A549 (cell line): ENCODE measurements at regions of chr2 and their contacts with region 1.

Region 1: GRCh38 chr2:174465327-174465726 is 21.5 kb downstream of the GPR155 start:
- DNase-seq: peak in 1 of 2 experiments; percentile 33
- ATAC-seq: peak; percentile 56 to 67; a peak in 4 of 6 replicates
- H3K4me3 ChIP-seq: no peak overlapping the region
- H3K27ac ChIP-seq: no peak overlapping the region
- H3K4me1 ChIP-seq: no peaks in the 10 kb centered on the region
- CTCF ChIP-seq: no peak
- EP300 ChIP-seq: no peak
- POLR2A ChIP-seq: no peak
- RAD21 ChIP-seq: no peak

Region 2: DNA sequence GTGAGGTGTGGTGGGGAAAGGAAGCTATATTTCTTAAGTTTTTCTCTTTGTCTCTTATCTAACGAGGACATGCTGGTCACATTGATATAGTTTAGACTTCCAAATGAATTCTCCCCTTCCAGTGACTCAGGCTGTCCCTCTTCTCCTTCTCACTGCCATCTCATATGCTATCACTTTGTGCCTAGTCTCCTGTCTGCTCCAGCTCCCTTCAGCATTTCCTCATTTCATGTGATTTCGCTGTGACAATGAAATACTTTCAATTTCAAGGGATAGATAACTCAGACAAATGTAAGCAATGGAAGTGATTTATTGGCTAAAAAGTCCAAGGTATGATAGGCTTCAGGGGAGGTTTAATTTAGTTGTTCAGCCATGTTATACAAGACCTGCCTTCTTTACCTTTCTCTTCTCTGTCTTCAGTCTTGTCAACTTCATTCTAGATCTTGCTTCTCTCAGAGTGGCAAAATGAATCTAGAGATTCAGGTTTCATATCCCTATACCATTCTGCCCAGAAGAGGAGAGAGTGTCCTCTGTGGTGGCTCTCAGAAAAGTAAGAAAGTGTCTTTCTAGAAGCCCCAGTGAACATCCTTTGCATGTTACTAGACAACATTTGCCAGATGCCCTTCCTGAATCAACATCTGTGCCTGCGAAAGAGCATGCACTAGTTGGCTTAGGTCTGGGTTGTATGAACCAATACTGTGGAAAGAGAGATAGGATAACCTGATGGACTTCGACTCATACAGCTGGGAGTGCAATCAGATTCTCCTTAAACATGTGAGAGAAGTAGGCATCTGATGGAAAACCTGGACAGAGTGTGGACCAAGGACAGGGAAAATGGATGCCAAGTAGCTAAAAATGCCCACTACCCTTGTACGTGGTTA is 51.4 kb after region 1 on chr2:
- CTCF ChIA-PET with region 1: interaction called, 27 read pairs
- POLR2A ChIA-PET with region 1: no interaction called
- DNase-seq: no peak
- ATAC-seq: no peak
- H3K4me3 ChIP-seq: no peak overlapping the region
- H3K27ac ChIP-seq: no peak overlapping the region
- H3K4me1 ChIP-seq: no peaks in the 10 kb centered on the region
- CTCF ChIP-seq: no peak
- EP300 ChIP-seq: no peak
- POLR2A ChIP-seq: no peak
- RAD21 ChIP-seq: no peak

Region 3: GRCh38 chr2:174546581-174547506 is 81.5 kb after region 1 on chr2:
- CTCF ChIA-PET with region 1: interaction called, 32 read pairs
- POLR2A ChIA-PET with region 1: interaction called, 4 read pairs
- DNase-seq: peak in 1 of 2 experiments; percentile 50
- ATAC-seq: peak; percentile 67 to 92
- H3K4me3 ChIP-seq: no peak overlapping the region
- H3K27ac ChIP-seq: no peak overlapping the region
- H3K4me1 ChIP-seq: no peaks in the 10 kb centered on the region
- CTCF ChIP-seq: peak; percentile 28
- EP300 ChIP-seq: no peak
- POLR2A ChIP-seq: no peak
- RAD21 ChIP-seq: peak; percentile 47 to 66

Region 4: GRCh38 chr2:174682578-174683391 is 217.5 kb after region 1 on chr2:
- CTCF ChIA-PET with region 1: interaction called, 78 read pairs
- POLR2A ChIA-PET with region 1: no interaction called
- DNase-seq: peak; percentile 55 to 64
- ATAC-seq: peak; percentile 73 to 76
- H3K4me3 ChIP-seq: peak overlapping the region; percentile 98
- H3K27ac ChIP-seq: peak overlapping the region; percentile 97 to 98
- H3K4me1 ChIP-seq: peaks cover 22% of the 10 kb centered on the region; the same call in 2 of the 3 replicates
- CTCF ChIP-seq: no peak
- EP300 ChIP-seq: no peak
- POLR2A ChIP-seq: no peak; the same call in 1 of the 2 replicates
- RAD21 ChIP-seq: no peak

Region 5: DNA sequence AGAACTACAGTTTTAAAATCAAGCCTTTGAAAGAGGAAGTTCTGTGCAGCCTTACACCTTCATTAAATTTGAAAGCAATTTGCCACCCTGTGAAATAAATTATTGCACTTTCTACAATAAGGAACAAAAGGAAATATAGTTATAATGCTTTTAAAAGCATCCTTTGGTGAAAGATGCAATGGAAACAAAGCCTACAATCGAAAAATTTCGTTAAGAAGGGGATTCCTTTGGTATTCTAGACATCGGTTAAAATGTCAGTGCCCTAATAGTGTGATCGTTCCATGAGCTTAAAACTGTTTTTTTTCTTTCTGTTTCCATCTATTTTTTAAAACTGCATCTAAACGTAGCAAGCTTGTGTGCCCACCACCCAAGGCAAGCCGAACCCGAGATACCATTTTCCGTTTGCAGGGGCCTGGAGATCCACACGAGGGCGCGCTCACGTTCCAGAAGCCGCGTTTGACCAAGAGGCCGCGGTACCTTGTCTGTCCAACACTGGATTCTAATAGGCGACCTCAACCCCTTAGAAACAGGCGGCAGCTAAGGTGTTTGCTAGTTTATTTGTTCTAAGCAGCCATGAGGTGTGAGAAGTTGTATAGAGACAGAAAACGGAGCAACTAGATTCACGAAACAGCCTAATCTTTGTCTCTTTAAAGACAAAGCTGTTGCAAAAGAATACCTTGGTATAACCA is 1645.8 kb after region 1 on chr2:
- CTCF ChIA-PET with region 1: no interaction called
- POLR2A ChIA-PET with region 1: no interaction called
- DNase-seq: peak; percentile 68 to 76
- ATAC-seq: peak; percentile 12 to 67; a peak in 4 of 6 replicates
- H3K4me3 ChIP-seq: no peak overlapping the region
- H3K27ac ChIP-seq: no peak overlapping the region
- H3K4me1 ChIP-seq: peaks cover 9% of the 10 kb centered on the region
- CTCF ChIP-seq: peak; percentile 82
- EP300 ChIP-seq: no peak
- POLR2A ChIP-seq: no peak
- RAD21 ChIP-seq: peak; percentile 37; a peak in 3 of 5 replicates